Heart left ventricle (tissue), 16 donors: ENCODE measurements at regions of chr17 and their contacts with region 1.

Region 1: DNA sequence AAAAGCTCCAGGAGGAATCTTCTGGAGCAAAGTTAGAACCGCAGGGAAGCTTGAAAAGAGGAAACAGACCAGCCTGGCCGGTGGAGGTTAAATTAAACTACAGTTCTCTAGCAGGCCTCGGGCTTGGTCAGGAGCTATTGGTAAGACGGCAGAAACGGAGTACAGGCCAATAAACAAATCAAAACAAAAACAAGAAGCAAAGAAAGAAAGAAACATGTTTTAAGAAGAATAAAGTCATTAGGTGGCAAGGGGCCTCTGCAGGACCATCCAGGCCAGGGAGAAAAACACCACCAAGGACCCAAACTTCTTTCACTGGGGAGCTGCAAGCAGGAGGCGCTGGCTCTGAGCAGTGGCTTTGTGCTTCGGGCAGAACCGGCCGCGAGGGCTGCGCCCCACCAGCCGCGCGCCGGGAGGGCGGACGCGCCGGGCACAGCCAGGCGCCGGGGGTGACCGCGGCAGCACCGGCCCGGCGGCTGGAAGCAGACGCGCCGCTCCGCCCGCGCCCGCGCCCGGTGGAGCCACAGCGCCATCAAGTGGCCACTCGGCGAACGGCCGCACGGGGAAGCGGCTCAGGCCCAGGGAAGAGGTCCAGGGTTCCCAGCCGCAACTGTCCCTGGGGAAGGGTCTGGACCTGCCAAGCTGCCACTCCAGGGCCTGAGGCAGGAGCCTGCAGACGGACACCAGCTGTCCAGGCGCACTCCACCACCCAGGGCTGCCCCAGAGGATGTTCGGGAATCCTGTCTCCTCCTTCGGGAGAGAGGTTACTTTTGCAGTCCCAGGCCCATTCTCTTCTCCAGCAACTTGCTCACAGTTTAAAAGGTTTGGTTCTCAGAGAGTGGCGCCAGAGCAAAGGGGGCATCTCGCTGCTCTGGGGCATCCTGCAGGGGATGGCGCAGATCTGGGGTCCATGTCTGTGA is 419.4 kb downstream of the SOX9 start:
- DNase-seq: peak; percentile 61 to 90 (median 71)
- ATAC-seq: peak; percentile 87 to 99 (median 92)
- H3K4me3 ChIP-seq: peak overlapping the region in 7 of 12 donors; percentile 6 to 51 (median 33)
- H3K27ac ChIP-seq: peak overlapping the region in 2 of 12 donors; percentile 47 to 57
- H3K4me1 ChIP-seq: peaks cover 0 to 10% (median 3%) of the 10 kb centered on the region in 12 donors
- H3K27me3 ChIP-seq: peaks cover 0 to 8% (median 0%) of the 10 kb centered on the region in 9 donors
- CTCF ChIP-seq: peak; percentile 71 to 99 (median 86)
- POLR2A ChIP-seq: no peak

Region 2: GRCh38 chr17:70767102-70767701 is 1773.0 kb before region 1 on chr17:
- intact Hi-C with region 1: loop called in 5 of 10 experiments (anchors 2 to 10 kb)
- DNase-seq: no peak
- ATAC-seq: no peak
- H3K4me3 ChIP-seq: no peak overlapping the region
- H3K27ac ChIP-seq: no peak overlapping the region
- H3K4me1 ChIP-seq: no peaks in the 10 kb centered on the region
- H3K27me3 ChIP-seq: no peaks in the 10 kb centered on the region
- CTCF ChIP-seq: peak in 10 of 12 donors; percentile 41 to 64 (median 49)
- POLR2A ChIP-seq: no peak

Region 3: GRCh38 chr17:71118039-71118438 is 1422.2 kb before region 1 on chr17:
- intact Hi-C with region 1: loop called in 9 of 10 experiments (anchors 1 to 5 kb)
- DNase-seq: no peak
- ATAC-seq: no peak
- H3K4me3 ChIP-seq: no peak overlapping the region
- H3K27ac ChIP-seq: no peak overlapping the region
- H3K4me1 ChIP-seq: no peaks in the 10 kb centered on the region
- H3K27me3 ChIP-seq: peaks cover 0 to 6% (median 0%) of the 10 kb centered on the region in 9 donors
- CTCF ChIP-seq: peak in 11 of 12 donors; percentile 17 to 50 (median 36)
- POLR2A ChIP-seq: no peak

Region 4: DNA sequence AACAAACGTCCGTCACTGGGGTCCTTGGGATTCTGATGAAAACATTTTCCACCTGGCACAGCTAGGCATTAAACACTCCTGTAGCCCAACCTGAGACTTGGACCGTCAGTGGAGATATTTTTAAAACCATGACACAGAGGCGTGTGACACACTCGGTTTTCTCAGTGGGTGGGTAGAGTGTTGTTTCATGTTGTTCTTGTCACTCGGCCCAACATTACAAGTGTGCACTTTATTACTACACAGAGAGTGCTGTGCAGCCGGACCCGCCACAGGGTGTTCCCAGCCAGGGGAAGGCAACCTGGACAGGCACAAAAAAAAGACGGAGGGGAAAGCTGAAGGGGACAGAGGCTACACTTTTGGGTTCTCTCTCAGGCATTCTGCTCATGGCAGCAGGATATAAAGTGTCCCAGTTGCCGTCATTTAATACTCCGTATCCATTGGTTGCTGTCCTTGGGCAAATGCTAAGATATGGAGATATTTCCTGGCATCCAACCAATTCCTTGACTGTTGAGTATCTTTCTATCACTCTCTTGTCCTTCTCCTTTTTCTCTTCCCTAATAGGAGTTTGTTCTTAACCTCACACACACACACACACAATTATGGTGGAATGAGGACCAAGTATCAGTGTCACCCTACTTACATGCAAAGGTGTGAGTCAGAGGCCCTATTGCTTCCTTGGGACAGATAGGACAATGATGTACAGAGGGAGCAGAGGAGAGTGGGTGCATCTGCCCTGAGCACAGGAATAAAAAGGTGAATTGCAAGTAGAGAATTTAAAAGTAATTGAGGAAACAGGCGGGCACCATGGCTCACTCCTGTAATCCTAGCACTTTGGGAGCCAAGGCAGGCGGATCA is 573.6 kb before region 1 on chr17:
- intact Hi-C with region 1: loop called in 1 of 10 experiments (anchors 10 kb)
- DNase-seq: peak in 4 of 5 donors; percentile 28 to 60 (median 36)
- ATAC-seq: peak; percentile 94 to 95 (median 94)
- H3K4me3 ChIP-seq: no peak overlapping the region
- H3K27ac ChIP-seq: peak overlapping the region in 11 of 12 donors; percentile 21 to 82 (median 62)
- H3K4me1 ChIP-seq: peaks cover 0 to 20% (median 0%) of the 10 kb centered on the region in 12 donors
- H3K27me3 ChIP-seq: no peaks in the 10 kb centered on the region
- CTCF ChIP-seq: no peak
- POLR2A ChIP-seq: no peak

Region 5: DNA sequence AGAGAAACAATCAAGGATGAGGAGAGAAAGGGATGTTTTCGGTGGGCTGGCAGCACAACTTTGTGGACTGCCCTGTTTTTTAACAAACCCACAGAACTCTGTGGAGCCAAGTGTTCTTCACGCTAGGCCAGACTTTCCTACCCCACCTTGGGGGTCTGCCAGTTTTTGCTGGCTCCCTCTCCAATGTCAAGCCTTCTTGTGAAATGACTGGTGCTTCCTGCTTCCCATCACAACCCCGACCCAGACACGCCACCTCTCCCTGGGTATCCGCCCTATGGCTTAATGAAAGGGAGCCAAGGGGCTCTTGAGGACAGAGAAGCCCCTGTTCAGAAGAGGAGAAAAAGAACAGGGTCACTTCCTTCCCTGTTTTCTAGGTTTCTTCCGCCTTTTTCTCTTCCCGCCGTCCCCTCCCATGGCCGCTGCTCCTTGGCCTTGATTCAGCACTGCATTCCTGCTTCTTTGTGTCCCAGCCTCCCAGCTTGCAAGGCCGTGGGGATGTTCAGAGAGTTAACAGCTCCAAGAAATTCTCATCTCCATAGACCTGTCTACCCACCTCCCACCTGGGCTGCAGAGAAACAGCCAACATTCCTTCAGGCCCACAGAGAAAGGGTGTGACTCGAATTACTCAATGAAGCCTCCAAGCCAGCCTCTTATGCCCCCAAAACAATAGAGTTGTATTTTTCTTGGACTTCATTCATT is 435.9 kb before region 1 on chr17:
- intact Hi-C with region 1: loop called in 1 of 10 experiments (anchors 10 kb)
- DNase-seq: peak in 1 of 5 donors; percentile 47
- ATAC-seq: peak in 2 of 4 donors; percentile 45 to 62
- H3K4me3 ChIP-seq: no peak overlapping the region
- H3K27ac ChIP-seq: no peak overlapping the region
- H3K4me1 ChIP-seq: peaks cover 0 to 8% (median 0%) of the 10 kb centered on the region in 12 donors
- H3K27me3 ChIP-seq: peaks cover 0 to 4% (median 0%) of the 10 kb centered on the region in 9 donors
- CTCF ChIP-seq: no peak
- POLR2A ChIP-seq: no peak

Region 6: DNA sequence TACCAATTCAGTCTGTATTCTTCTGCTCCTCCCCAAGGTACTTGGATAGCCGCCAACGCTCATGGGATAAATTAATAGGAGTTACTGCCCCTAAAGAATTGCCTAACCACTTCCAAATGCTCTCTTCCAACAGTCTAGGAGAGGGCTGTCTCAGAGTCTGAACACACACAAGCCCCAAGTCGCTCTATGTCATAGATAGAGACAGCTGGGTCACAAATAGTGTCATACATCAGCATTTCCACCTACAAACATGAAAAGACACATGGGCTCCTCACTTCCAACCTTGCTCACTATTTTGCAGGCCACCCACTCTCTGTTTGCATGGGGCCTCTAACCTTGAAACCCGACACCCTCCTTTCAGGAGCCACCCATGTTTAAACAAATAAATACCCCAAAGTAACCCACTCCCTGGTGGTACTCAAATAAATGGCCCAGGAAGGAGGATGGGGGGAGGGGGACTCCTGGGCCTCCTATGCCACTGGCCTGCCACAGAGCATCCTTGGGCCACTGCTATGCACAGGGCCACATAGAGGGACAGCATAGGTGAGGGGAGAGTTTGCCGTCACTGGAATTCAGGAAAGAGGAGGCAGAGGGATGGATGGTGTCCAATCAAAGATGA is 153.5 kb before region 1 on chr17:
- intact Hi-C with region 1: no loop called
- DNase-seq: no peak
- ATAC-seq: no peak
- H3K4me3 ChIP-seq: no peak overlapping the region
- H3K27ac ChIP-seq: no peak overlapping the region
- H3K4me1 ChIP-seq: peaks cover 0 to 12% (median 1%) of the 10 kb centered on the region in 12 donors
- H3K27me3 ChIP-seq: no peaks in the 10 kb centered on the region
- CTCF ChIP-seq: no peak
- POLR2A ChIP-seq: no peak